HEK293 (cell line): ENCODE measurements at regions of chr6 and their contacts with region 1.

Region 1: DNA sequence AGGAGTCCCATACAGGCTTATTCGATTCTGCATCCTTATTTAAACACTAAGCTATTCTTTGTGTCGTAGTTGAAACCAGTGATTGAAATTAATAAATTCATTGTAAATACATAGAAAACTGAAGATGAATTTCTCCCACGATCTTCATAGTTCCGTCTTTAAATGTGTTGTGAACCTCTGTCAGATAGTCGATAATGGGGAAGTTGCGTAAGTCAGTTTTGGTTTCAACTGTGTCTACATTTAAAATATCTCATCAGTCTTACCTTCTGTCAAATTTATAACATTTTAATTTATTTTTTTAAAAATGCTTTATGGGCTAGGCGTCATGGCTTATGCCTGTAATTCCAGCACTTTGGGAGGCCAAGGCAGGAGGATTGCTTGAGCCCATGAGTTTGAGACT is 12.7 kb downstream of the STX11 start:
- H3K4me3 ChIP-seq: no peak overlapping the region
- H3K27ac ChIP-seq: no peak overlapping the region
- H3K4me1 ChIP-seq: no peaks in the 10 kb centered on the region
- CTCF ChIP-seq: no peak

Region 2: GRCh38 chr6:144095331-144096002 is 67.5 kb before region 1 on chr6 and contains the start of gene SF3B5:
- CTCF ChIA-PET with region 1: no interaction called
- POLR2A ChIA-PET with region 1: no interaction called
- H3K4me3 ChIP-seq: peak within 1 kb of the TSS; percentile 69
- H3K27ac ChIP-seq: peak within 1 kb of the TSS; percentile 42; the same call in 1 of the 2 replicates
- H3K4me1 ChIP-seq: peaks cover 5% of the 10 kb centered on the region
- CTCF ChIP-seq: peak; percentile 36; the same call in 1 of the 2 replicates

Region 3: GRCh38 chr6:144181639-144182038 is 18.7 kb after region 1 on chr6:
- CTCF ChIA-PET with region 1: no interaction called
- POLR2A ChIA-PET with region 1: interaction called, 10 read pairs
- H3K4me3 ChIP-seq: no peak overlapping the region
- H3K27ac ChIP-seq: no peak overlapping the region
- H3K4me1 ChIP-seq: no peaks in the 10 kb centered on the region
- CTCF ChIP-seq: no peak